GM12878 (cell line): ENCODE measurements at regions of chr10 and their contacts with region 1.

Region 1: DNA sequence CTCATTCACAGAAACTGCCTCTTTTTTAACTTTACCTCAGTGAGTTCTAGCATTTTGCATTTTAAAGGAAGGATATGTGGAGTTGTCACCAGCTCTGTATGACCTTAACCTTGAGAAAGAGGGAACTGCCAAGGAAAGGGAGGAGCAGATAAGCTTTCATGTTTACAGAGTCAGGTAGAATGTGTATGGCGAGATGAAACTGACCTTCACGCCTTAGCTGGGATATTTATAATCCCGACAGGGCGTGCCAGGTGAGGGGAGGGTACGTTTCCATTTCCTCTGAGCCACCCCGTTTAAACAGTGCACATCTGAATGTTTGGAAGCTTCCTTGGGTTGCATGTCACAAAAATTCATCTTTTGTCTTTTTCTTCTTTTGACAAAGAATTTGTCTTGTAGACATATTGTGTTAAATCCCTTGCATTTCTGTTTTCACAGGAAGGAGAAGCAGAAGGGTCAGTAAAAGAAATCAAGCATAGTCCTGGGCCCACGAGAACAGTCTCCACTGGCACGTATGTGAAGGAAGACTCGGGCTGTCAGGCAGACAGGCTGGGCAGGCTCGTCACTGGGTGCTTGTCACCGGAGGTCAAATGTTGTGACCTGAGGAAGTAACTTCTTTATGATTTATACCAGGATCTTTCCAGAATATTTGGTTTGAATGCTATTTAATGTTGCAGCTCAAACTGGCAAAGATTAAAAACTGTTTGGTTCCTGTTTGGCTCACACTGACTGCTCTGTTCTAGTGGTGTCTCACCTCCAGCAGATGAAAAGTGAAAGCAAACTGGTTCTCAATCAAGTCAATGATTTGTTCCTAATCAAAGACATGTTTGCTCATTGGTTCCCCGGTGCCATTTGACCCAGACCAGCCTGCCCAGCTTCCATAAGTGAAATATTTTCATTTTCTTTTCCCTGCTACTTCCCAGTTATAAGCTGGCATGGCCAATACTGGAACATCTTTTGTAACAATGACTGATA is 16.2 kb downstream of the OPTN start:
- DNase-seq: no peak
- ATAC-seq: peak; percentile 90
- H3K4me3 ChIP-seq: peak overlapping the region; percentile 25; the same call in 1 of the 2 replicates
- H3K27ac ChIP-seq: peak overlapping the region; percentile 61
- H3K4me1 ChIP-seq: peaks cover 15% of the 10 kb centered on the region
- H3K27me3 ChIP-seq: no peaks in the 10 kb centered on the region
- CTCF ChIP-seq: no peak
- EP300 ChIP-seq: no peak
- POLR2A ChIP-seq: no peak
- RAD21 ChIP-seq: no peak

Region 2: DNA sequence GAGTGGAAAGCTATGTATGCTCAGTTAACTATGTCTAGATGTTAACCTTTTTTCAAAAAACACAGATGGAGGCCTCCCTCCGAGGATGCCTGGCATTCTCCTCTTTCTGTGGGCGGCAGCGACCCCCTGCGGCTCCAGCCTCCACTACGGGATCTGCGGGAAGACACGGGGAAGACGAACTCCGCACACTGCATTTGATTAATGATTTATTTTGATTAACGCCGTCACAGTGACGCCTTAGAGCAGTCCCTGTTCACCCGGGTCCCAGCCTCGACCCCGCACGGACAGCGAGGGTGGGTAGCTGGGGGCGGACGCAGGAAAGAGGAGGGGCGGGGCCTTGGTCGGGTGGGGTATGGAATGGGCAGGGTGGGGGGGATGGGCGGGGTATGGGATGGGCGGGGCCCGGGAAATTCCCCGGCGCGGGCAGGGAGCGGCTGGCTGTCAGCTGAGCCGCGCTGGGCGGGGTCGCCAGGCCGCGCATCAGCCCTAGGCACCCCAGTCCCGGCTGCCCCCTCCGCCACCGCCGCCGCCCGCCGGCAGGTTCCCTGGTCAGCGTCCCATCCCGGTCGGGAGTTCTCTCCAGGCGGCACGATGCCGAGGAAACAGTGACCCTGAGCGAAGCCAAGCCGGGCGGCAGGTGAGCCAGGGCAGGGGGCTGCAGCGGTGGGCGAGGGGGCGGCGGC is 16.3 kb before region 1 on chr10 and contains the start of gene OPTN:
- CTCF ChIA-PET with region 1: interaction called, 19 read pairs
- POLR2A ChIA-PET with region 1: no interaction called
- RAD21 ChIA-PET with region 1: interaction called, 4 read pairs
- SMC1A ChIA-PET with region 1: no interaction called
- in situ Hi-C with region 1: no loop called
- intact Hi-C with region 1: no loop called
- DNase-seq: peak; percentile 54
- ATAC-seq: peak; percentile 85
- H3K4me3 ChIP-seq: peak within 1 kb of the TSS; percentile 98
- H3K27ac ChIP-seq: peak within 1 kb of the TSS; percentile 46
- H3K4me1 ChIP-seq: peaks cover 8% of the 10 kb centered on the region
- H3K27me3 ChIP-seq: no peaks in the 10 kb centered on the region
- CTCF ChIP-seq: peak; percentile 73 to 88 (median 77)
- EP300 ChIP-seq: no peak
- POLR2A ChIP-seq: peak; percentile 84
- RAD21 ChIP-seq: peak; percentile 52
- polyA plus RNA-seq, gene OPTN: 15.2 to 22.3 TPM